ENCODE measurements at regions of chr5 and their contacts with region 1.

Region 1: DNA sequence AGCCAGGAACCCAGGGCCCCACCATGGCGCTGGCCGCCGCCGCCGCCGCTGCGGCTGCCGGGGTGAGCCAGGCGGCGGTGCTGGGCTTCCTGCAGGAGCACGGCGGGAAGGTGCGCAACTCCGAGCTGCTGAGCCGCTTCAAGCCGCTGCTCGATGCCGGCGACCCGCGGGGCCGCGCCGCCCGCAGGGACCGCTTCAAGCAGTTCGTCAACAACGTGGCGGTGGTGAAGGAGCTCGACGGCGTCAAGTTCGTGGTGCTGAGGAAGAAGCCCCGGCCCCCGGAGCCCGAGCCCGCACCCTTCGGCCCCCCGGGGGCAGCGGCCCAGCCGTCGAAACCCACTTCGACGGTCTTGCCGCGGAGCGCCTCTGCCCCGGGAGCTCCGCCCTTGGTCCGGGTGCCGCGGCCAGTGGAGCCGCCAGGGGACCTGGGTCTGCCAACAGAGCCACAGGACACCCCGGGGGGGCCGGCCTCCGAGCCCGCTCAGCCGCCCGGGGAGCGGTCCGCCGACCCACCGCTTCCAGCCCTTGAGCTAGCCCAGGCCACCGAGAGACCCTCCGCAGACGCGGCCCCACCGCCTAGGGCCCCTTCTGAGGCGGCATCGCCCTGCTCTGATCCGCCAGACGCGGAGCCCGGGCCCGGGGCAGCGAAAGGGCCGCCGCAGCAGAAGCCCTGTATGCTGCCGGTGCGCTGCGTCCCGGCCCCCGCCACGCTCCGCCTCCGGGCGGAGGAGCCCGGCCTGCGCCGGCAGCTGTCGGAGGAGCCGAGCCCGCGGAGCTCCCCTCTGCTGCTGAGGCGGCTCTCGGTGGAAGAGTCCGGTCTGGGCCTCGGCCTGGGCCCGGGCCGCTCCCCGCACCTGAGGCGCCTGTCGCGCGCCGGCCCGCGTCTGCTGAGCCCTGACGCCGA is 749 bp downstream of the SOWAHA start:
- DNase-seq: peak in 1 of 3 donors; percentile 34
- ATAC-seq: peak; percentile 45 to 67 (median 50)
- H3K4me3 ChIP-seq: peak overlapping the region in 2 of 3 donors; percentile 47 to 56
- H3K27ac ChIP-seq: no peak overlapping the region
- H3K4me1 ChIP-seq: peaks cover 0 to 8% (median 0%) of the 10 kb centered on the region in 4 donors
- H3K27me3 ChIP-seq: no peaks in the 10 kb centered on the region
- CTCF ChIP-seq: no peak
- POLR2A ChIP-seq: no peak

Region 2: GRCh38 chr5:132753135-132753987 is 60.5 kb before region 1 on chr5:
- intact Hi-C with region 1: loop called in 1 of 2 experiments (anchors 10 kb)
- DNase-seq: no peak
- ATAC-seq: peak; percentile 40 to 63 (median 44)
- H3K4me3 ChIP-seq: no peak overlapping the region
- H3K27ac ChIP-seq: no peak overlapping the region
- H3K4me1 ChIP-seq: no peaks in the 10 kb centered on the region
- H3K27me3 ChIP-seq: no peaks in the 10 kb centered on the region
- CTCF ChIP-seq: peak in 2 of 4 donors; percentile 8 to 9
- POLR2A ChIP-seq: no peak

Measured in right lobe of liver (tissue), 6 donors.